ENCODE measurements at regions of chr22 and their contacts with region 1.

Region 1: DNA sequence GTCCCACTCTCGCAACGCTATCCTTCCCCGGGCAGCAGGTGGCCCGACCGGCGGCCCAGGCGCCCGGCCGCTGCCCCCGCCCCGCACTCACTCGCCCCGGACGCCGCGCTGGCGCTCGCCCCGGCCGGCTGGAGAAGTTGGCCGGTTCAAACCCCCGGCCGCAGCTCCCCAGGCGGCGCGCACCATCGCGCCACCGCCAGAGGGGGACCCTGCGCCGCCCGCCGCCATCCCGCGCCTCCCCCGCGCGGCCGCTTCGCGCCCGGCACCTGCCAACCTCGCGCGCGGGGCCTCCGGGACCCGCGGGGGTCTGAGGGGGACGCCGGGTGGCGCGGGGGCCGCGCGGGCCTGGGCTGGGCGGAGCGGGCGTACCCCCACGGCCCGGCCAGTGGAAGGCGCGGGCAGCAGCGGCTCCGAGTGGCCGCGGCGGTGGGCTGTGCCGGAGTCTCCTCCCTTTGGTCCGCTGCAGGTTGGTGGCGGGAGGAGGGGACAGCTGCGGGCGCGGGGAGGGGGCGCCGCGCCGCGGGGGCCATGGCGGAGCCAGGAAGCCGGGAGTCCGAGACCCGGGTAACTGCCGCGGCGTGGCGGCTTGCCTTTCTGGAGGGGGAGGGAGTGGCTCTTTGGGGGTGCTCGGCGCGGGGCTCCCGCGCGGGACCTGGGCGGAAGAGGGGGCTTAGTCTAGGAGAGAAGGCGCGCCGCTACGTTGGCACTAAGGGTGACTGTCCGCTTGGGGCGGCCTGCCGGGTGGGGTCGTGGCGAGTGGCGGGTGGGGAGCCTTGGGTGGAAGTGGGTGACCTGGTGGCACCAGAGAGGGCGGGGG is at the starts of genes MPST and TST:
- DNase-seq: peak; percentile 89
- H3K4me3 ChIP-seq: peak within 1 kb of the TSS; percentile 76 to 99 (median 91)
- H3K27ac ChIP-seq: peak within 1 kb of the TSS; percentile 88 to 93 (median 89)
- H3K4me1 ChIP-seq: peaks cover 0 to 58% (median 46%) of the 10 kb centered on the region in 4 donors
- H3K27me3 ChIP-seq: no peaks in the 10 kb centered on the region
- CTCF ChIP-seq: no peak
- EP300 ChIP-seq: no peak
- POLR2A ChIP-seq: peak; percentile 39 to 56
- total RNA-seq, gene MPST: 94.2 to 143 (median 111) TPM
- total RNA-seq, gene TST: 29.1 to 31.4 (median 30.3) TPM

Region 2: DNA sequence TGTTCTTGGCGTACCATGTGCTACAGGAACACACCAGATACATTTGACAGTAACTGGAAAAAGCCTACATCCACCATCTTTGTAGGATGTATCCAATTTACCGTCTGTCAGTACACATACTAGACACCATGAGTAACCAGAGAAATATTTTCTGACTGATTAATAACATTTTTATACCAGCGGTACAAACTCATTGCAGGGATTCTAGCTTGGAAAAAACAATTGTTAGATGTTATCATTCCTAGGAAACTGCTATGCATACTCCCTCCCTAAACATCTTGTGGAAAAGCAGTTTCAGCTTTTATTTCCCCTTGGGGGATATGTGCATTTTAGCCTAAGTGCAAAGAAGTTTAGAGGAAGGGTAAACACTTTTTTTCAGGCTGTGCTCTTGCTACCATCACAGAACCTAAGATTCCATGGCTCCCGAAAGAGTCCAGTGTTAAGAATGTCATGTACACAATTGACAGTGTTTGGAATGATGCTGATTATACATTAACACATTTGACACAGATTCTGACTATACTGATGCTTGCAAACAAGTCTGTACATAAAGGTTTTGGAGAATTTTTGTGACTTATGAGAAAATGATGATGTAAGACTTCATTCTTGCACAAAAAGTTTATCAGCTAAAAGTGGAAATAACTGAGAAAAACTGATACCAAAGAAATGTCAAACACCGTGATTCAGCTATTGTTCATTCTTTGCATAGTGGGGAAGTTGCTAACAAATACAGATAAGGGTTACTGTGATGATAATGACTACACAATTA is 135.0 kb before region 1 on chr22:
- intact Hi-C with region 1: no loop called
- DNase-seq: no peak
- H3K4me3 ChIP-seq: no peak overlapping the region
- H3K27ac ChIP-seq: no peak overlapping the region
- H3K4me1 ChIP-seq: no peaks in the 10 kb centered on the region
- H3K27me3 ChIP-seq: no peaks in the 10 kb centered on the region
- CTCF ChIP-seq: no peak
- EP300 ChIP-seq: no peak
- POLR2A ChIP-seq: no peak

Region 3: DNA sequence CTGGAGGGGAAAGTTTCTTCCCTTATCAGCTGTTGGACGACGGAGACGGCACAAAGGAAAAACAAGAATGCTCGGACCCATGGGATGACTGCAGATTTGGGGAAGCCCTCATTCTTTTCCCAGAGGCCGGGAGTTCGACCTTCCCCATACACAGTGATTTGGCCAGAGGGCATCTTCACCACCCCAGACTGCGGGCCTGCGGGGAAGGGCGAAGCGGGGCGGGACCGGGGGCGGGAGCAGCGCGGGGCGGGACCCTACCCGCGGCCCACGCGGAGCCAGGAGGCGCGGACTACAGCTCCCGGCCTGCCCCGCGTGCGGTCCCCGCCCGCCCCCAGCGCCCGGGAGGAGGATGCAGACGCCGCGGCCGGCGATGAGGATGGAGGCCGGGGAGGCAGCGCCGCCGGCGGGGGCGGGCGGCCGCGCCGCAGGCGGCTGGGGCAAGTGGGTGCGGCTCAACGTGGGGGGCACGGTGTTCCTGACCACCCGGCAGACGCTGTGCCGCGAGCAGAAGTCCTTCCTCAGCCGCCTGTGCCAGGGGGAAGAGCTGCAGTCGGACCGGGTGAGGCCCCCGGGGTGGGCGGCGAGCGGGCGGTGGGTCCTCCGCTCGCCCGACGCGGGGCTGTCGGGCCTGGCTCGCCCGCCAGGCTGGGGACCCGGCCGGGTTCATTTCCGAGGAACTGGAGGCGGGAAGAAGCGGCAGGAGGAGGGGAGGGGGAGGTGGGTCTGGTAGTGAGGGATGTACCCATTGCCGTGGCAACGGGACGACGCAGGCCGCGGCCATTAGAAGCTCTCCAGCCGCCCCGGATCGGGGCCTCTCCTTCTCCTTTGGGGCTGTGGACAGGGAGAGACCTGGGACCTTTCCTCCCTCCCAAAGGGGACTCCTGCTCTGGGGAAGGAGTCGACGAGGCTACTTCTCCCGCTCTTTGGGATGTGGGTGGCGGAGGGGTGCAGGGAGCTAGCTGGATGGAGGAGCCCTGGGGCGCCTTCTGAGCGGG is 32.2 kb after region 1 on chr22 and contains the start of gene KCTD17:
- intact Hi-C with region 1: loop called (anchors 2 kb)
- DNase-seq: peak; percentile 80
- H3K4me3 ChIP-seq: peak within 1 kb of the TSS; percentile 57 to 87 (median 82)
- H3K27ac ChIP-seq: peak within 1 kb of the TSS in 2 of 4 donors; percentile 47 to 53
- H3K4me1 ChIP-seq: peaks cover 0 to 26% (median 18%) of the 10 kb centered on the region in 4 donors
- H3K27me3 ChIP-seq: no peaks in the 10 kb centered on the region
- CTCF ChIP-seq: no peak
- EP300 ChIP-seq: no peak
- POLR2A ChIP-seq: no peak
- total RNA-seq, gene KCTD17: 17.8 to 49.0 (median 24.0) TPM

Region 4: DNA sequence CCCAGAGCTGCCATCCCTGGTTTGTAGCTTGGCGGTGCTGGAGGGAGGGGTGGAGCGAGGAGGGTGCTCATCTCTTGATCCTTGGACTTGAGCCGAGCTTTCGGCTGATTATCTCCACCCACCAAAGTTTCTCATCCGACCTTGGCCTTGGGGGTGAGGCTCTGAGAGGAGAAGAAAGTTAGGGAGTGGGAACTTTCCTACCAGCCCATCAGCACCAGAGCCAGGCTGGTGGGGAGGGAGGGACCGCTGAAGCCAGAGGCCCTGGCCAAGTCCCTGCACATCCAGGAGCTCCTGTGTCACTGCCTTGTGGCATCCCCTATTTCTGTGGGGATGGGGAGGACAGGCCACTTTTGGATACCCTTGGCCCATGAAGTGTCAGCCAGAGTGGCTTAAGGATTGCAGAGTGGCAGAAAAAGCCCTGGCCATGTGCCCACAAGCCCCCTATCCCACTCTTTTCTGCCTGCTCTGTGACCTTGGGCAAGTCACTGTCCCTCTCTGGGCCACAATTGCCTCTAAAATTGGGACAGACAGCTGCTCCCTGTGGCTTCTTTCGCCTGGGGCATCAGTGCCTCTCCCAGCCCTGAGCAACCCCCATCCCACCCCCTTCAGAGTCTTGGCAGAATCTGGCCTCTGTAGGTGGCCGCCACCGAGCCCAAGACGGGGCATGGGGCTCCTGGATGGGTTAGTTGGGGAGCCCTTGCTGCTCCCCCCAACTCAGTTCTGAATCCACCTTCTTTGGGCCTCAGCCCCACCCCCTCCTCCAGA is 42.3 kb after region 1 on chr22:
- intact Hi-C with region 1: no loop called
- DNase-seq: no peak
- H3K4me3 ChIP-seq: no peak overlapping the region
- H3K27ac ChIP-seq: no peak overlapping the region
- H3K4me1 ChIP-seq: no peaks in the 10 kb centered on the region
- H3K27me3 ChIP-seq: no peaks in the 10 kb centered on the region
- CTCF ChIP-seq: no peak
- EP300 ChIP-seq: no peak
- POLR2A ChIP-seq: no peak

Measured in sigmoid colon (tissue), 7 donors.